K562 (cell line): ENCODE measurements at regions of chr12 and their contacts with region 1.

Region 1: GRCh38 chr12:89542912-89543592 is 17.2 kb upstream of the POC1B start:
- DNase-seq: peak; percentile 67 to 89 (median 70)
- ATAC-seq: peak; percentile 81
- H3K4me3 ChIP-seq: no peak overlapping the region
- H3K27ac ChIP-seq: no peak overlapping the region
- H3K4me1 ChIP-seq: peaks cover 11 to 48% of the 10 kb centered on the region in 2 experiments
- H3K27me3 ChIP-seq: no peaks in the 10 kb centered on the region
- CTCF ChIP-seq: peak; percentile 77 to 92 (median 84)
- EP300 ChIP-seq: no peak
- POLR2A ChIP-seq: no peak
- RAD21 ChIP-seq: peak; percentile 95

Region 2: GRCh38 chr12:89796798-89797382 is 253.8 kb after region 1 on chr12:
- CTCF ChIA-PET with region 1: no interaction called
- POLR2A ChIA-PET with region 1: no interaction called
- in situ Hi-C with region 1: no loop called
- intact Hi-C with region 1: loop called (anchors 2 kb)
- DNase-seq: peak; percentile 15 to 51 (median 20)
- ATAC-seq: peak; percentile 68
- H3K4me3 ChIP-seq: no peak overlapping the region
- H3K27ac ChIP-seq: no peak overlapping the region
- H3K4me1 ChIP-seq: peaks cover 6 to 29% of the 10 kb centered on the region in 2 experiments; a peak in 3 of 5 replicates
- H3K27me3 ChIP-seq: no peaks in the 10 kb centered on the region
- CTCF ChIP-seq: peak in 2 of 3 experiments; percentile 24 to 44; a peak in 2 of 6 replicates
- EP300 ChIP-seq: no peak
- POLR2A ChIP-seq: no peak
- RAD21 ChIP-seq: peak in 1 of 2 experiments; percentile 34; a peak in 1 of 4 replicates

Region 3: GRCh38 chr12:89927226-89927698 is 384.2 kb after region 1 on chr12:
- CTCF ChIA-PET with region 1: no interaction called
- POLR2A ChIA-PET with region 1: no interaction called
- in situ Hi-C with region 1: no loop called
- intact Hi-C with region 1: loop called (anchors 10 kb)
- DNase-seq: peak in 2 of 4 experiments; percentile 21 to 24
- ATAC-seq: peak; percentile 47; the same call in 1 of the 3 replicates
- H3K4me3 ChIP-seq: no peak overlapping the region
- H3K27ac ChIP-seq: peak overlapping the region; percentile 31; the same call in 1 of the 3 replicates
- H3K4me1 ChIP-seq: no peaks in the 10 kb centered on the region; a peak in 1 of 5 replicates
- H3K27me3 ChIP-seq: no peaks in the 10 kb centered on the region
- CTCF ChIP-seq: no peak
- EP300 ChIP-seq: no peak
- POLR2A ChIP-seq: no peak
- RAD21 ChIP-seq: no peak

Region 4: DNA sequence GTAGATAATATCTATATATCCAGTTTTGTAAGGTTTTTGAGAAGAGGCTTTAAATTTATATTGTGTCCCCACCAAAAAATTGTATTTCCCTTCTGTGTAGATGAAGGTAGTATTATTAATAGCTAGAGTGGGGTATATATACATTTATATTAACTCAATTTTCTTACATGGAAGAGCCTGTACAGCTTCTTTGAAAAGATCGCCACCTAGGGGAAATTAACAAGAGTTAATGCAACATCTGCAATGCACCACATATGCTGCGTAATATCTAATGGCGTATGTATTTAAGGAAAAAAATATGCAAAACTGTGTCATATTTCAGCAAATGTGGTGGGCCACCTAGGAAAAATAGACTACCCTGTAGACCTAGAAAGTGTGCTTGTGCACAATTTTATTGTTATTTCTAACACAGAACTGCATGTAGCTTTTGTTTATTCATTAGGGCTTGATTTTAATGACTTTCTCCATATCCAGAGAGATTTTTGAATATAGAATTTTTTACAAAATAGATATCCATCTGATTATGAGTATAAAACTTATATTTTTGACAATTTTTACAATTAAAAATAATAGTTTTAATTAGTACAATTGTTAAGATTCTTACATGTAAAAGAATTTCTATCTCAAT is 1397.9 kb after region 1 on chr12:
- CTCF ChIA-PET with region 1: no interaction called
- POLR2A ChIA-PET with region 1: no interaction called
- in situ Hi-C with region 1: no loop called
- intact Hi-C with region 1: loop called (anchors 2 kb)
- DNase-seq: peak in 3 of 4 experiments; percentile 11 to 40 (median 20)
- ATAC-seq: peak; percentile 84
- H3K4me3 ChIP-seq: no peak overlapping the region
- H3K27ac ChIP-seq: no peak overlapping the region
- H3K4me1 ChIP-seq: no peaks in the 10 kb centered on the region
- H3K27me3 ChIP-seq: no peaks in the 10 kb centered on the region
- CTCF ChIP-seq: peak; percentile 36 to 67 (median 42); a peak in 5 of 6 replicates
- EP300 ChIP-seq: no peak
- POLR2A ChIP-seq: no peak
- RAD21 ChIP-seq: peak; percentile 44 to 66